AG04450 (cell line): ENCODE measurements at regions of chr12 and their contacts with region 1.

Region 1: DNA sequence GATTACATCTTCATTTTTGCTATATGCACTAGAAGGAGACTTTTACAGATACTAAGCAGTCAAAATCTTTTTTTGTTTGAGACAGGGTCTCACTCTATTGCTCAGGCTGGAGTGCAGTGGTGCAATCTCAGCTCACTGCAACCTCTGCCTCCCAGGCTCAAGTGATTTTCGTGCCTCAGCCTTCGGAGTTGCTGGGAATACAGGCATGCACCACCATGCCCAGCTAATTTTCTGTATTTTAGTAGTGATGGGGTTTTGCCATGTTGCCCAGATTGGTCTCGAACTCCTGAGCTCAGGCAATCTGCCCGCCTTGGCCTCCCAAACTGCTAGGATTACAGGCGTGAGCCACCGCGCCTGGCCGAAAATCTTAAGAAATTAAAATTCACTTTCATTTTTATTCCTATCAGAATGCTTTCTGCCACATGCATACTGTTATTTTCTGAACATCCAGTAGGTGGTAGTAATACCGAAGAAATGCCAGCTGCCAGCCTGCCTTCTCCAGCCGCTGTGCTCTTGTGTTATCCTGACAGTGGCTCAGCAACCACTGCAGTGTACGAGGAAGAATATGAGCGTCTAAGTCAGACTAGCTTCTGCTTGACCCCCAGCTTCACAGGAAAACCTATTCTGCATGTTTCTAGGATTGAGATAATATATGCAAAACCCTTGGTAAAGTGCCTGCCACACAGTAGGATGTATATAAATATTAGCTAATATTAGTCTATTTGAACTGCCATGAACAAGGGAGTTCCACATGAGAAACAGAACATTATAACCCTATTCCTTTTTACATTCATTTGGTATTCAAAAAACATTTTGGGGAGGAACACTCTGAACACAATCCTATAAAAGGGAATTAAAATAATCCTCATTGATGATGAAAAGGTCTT is 54.2 kb downstream of the RPAP3 start:
- DNase-seq: peak; percentile 42
- H3K4me3 ChIP-seq: no peak overlapping the region
- H3K27ac ChIP-seq: no peak overlapping the region
- H3K27me3 ChIP-seq: no peaks in the 10 kb centered on the region
- CTCF ChIP-seq: peak; percentile 72

Region 2: DNA sequence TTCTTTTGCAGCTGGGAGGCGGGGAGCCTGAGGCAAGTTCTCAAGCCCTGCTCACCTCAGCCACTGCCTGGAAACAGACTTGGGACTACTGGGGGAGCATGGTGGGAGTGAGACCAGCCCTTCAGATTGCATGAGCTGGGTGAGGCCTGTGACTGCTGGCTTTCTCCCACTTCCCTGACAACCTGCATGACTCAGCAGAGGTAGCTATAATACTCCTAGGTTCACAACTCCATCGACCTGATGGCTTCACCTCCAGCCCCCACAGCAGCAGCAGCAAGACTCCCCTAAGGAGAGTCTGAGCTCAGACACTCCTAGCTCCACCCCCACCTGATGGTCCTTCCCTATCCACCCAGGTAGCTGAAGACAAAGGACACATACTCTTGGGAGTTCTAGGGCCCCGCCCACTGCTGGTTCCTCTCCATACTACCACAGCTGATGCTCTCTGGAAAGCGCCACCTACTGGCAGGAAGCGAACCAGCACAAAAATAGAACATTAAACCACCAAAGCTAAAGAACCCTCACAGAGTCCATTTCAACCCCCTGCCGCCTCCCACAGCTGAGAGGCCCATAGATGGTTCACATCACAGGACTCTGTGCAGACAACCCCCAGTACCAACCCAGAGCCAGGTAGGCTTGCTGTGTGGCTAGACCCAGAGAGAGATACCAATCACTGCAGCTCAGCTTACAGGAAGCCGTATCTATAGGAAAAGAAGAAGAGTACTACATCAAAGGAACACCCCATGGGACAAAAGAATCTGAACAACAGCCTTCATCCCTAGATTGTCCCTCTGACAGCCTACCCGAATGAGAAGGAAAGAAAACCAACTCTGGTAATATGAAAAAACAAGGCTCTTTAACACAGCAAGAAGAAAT is 14.5 kb before region 1 on chr12:
- CTCF ChIA-PET with region 1: interaction called, 10 read pairs
- POLR2A ChIA-PET with region 1: no interaction called
- DNase-seq: no peak
- H3K4me3 ChIP-seq: no peak overlapping the region
- H3K27ac ChIP-seq: no peak overlapping the region
- H3K27me3 ChIP-seq: no peaks in the 10 kb centered on the region
- CTCF ChIP-seq: peak; percentile 46

Region 3: GRCh38 chr12:47672068-47672467 is 20.5 kb after region 1 on chr12:
- CTCF ChIA-PET with region 1: interaction called, 13 read pairs
- POLR2A ChIA-PET with region 1: no interaction called
- DNase-seq: no peak
- H3K4me3 ChIP-seq: no peak overlapping the region
- H3K27ac ChIP-seq: no peak overlapping the region
- H3K27me3 ChIP-seq: no peaks in the 10 kb centered on the region
- CTCF ChIP-seq: no peak

Region 4: DNA sequence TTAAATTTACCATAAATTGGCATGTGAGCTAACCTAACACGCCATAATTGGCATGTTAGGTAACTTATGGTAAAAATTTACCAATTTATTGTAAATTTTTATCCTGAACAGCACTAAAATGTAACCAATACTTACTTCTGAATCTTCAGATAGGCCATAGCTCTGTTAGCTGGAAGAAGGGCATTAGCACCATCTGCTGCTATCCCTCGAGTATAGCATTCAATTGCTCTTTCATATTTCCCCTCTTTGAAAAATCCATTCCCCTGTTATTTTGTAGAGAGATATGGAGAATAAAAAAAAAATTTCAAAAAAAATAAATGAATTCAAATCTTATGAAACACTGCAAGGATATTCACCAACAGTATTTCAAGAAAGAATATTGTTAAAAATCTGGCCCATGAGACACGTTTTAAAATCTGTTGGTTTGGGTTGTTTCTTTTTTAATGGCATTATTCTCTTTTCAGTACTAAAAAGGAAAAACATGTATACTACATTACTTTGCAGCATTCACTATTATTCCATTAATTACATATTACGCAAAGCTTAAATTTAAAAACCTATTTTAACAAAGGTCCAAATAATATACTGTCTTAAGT is 35.1 kb after region 1 on chr12:
- CTCF ChIA-PET with region 1: interaction called, 35 read pairs
- POLR2A ChIA-PET with region 1: no interaction called
- DNase-seq: peak; percentile 26
- H3K4me3 ChIP-seq: no peak overlapping the region
- H3K27ac ChIP-seq: no peak overlapping the region
- H3K27me3 ChIP-seq: no peaks in the 10 kb centered on the region
- CTCF ChIP-seq: peak; percentile 84